ENCODE measurements at regions of chr16 and their contacts with region 1.

Region 1: DNA sequence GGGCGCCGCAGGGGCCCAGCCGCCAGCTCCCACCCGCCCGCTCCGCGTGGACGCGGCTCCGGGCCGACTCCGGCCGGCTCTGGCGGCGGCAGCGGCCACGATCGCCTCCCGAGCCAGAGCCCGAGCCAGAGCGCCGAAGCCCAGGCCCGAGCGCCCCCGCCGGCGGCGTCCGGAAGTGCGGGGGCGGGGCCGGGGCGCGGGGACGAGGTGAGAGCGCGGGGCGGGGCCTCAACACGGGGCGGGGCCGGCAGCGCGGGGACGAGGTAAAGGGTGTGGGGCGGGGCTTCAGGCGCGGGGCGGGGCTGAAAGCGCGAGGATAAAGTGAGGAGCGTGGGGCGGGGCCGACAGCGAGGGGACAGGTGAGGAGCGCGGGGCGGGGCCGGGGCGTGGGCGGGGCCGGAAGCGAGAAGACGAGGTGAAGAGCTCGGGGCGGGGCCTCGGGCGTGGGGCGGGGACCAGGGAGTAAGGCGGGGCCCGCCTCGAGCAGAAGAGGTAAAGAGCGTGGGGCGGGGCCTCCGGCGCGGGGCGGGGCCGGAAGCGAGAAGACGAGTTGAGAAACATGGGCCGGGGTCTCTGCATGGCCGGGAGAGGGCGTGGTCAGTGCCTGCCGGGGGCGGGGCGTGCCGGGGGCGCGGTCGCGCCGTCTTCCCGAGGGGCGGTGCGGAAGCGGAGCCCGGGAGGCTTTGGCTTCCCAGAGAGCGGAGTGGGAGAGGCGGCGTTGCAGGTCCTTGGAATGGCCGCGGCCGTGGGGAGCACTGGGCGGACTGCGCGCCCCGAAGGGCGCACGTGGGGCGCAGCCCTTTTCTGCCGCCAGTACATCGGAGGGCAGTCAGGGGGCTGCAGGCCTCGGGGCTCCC is at the start of gene AXIN1:
- DNase-seq: peak; percentile 99 to 100
- ATAC-seq: peak; percentile 84 to 86
- H3K4me3 ChIP-seq: peak within 1 kb of the TSS; percentile 54 to 75 (median 66)
- H3K27ac ChIP-seq: peak within 1 kb of the TSS; percentile 58 to 79 (median 74)
- H3K4me1 ChIP-seq: peaks cover 7 to 15% of the 10 kb centered on the region in 2 donors
- H3K27me3 ChIP-seq: no peaks in the 10 kb centered on the region
- CTCF ChIP-seq: peak in 4 of 5 experiments; percentile 49 to 83 (median 64)
- POLR2A ChIP-seq: peak; percentile 41 to 43
- total RNA-seq, gene AXIN1: 27.1 to 41.9 (median 32.7) TPM

Region 2: DNA sequence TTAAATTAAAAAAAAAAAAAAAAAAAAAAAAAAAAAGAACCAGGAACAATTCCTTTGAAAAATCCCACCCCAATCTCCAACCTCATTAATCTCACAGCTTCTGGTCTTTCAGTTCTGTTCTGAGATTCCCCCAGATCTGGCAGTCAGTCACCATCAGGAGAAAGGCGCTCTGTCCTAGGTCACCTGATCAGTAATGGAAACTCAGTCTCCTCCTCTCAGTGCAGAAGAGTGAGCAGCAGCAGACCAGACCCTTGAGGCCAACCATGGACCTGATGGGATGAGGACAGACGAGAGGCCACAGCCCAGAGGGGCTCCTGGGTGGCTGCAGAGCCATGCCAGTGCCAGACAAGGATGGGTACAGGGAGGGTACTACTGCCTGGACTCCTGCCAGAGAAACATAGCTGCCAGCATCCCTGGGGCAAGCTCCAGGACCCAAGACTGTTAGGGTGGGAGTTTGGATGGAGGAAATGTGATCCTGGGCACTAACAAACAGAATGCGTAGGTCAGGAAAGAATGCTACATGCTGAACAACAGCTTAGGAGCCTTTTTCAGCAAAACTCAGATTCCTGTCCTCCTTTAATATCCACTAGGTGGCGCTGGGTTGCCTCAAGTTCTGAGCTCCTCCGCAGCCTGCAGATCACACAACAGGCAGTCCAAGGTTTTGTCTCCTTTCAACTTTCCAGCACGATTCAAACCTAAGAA is 246.0 kb before region 1 on chr16:
- in situ Hi-C with region 1: no loop called
- intact Hi-C with region 1: loop called (anchors 5 kb)
- DNase-seq: peak; percentile 49
- ATAC-seq: peak in 1 of 2 donors; percentile 11
- H3K4me3 ChIP-seq: no peak overlapping the region
- H3K27ac ChIP-seq: no peak overlapping the region
- H3K4me1 ChIP-seq: peaks cover 30 to 32% of the 10 kb centered on the region in 2 donors
- H3K27me3 ChIP-seq: no peaks in the 10 kb centered on the region
- CTCF ChIP-seq: peak; percentile 70 to 88 (median 81)
- POLR2A ChIP-seq: no peak

Region 3: GRCh38 chr16:234468-235305 is 118.1 kb before region 1 on chr16 and contains the start of gene FAM234A:
- in situ Hi-C with region 1: no loop called
- intact Hi-C with region 1: loop called (anchors 2 kb)
- DNase-seq: peak; percentile 92 to 93
- ATAC-seq: peak; percentile 86 to 87
- H3K4me3 ChIP-seq: peak within 1 kb of the TSS; percentile 89 to 98 (median 96)
- H3K27ac ChIP-seq: peak within 1 kb of the TSS; percentile 99 to 100 (median 100)
- H3K4me1 ChIP-seq: peaks cover 15 to 16% of the 10 kb centered on the region in 2 donors
- H3K27me3 ChIP-seq: no peaks in the 10 kb centered on the region
- CTCF ChIP-seq: peak in 4 of 5 experiments; percentile 37 to 51 (median 48)
- POLR2A ChIP-seq: peak; percentile 99 to 100
- total RNA-seq, gene FAM234A: 85.2 to 288 (median 251) TPM

Region 4: DNA sequence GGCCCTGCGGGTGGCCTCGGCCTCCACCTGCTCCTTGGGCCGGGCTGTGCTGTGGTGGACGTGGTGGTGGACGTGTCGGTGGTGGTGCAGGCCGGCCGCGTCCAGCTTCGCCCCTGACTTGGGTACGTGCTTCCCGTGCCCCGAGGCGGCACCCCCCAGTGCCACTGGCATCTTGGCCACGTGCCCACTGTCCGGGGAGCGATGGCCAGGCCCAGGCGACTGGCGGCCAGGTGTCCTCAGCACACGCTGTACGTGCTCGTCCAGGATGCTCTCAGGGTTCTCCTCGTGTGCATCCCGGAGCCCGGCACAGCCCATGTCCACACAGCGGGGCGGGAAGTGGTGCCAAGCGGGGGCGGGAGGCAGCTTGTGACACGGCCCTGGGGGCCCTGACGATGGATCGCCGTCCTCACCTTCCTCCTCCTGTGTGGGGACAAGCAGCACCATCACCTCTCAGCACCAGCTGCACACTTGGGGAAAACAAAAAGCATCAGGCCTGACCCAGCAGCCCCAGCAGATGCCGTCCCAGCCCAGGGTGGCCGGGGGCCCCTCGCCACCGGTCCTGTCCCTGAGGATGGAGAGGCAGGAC is 54.9 kb before region 1 on chr16:
- in situ Hi-C with region 1: no loop called
- intact Hi-C with region 1: no loop called
- DNase-seq: no peak
- ATAC-seq: no peak
- H3K4me3 ChIP-seq: no peak overlapping the region
- H3K27ac ChIP-seq: no peak overlapping the region
- H3K4me1 ChIP-seq: no peaks in the 10 kb centered on the region
- H3K27me3 ChIP-seq: no peaks in the 10 kb centered on the region
- CTCF ChIP-seq: no peak
- POLR2A ChIP-seq: no peak

Region 5: DNA sequence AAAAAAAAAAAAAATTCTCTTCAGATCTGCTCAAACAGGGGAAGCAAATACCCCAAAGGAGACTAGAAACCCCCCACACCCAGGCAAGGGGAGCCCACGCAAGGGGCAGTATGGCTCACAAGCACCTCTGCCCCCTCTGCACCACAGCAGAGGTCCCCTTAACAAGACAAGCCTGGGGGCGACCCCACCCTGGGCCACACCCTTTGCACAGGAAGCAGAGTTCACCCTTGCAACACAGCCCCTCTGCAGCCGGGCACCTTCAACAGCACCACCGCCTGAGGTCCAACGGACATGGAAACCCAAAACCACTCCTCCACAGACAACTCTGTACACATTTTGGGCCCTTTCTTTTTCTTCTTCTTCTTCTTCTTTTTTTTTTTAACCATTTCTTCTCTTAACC is 13.1 kb before region 1 on chr16:
- in situ Hi-C with region 1: no loop called
- intact Hi-C with region 1: no loop called
- DNase-seq: no peak
- ATAC-seq: no peak
- H3K4me3 ChIP-seq: no peak overlapping the region
- H3K27ac ChIP-seq: no peak overlapping the region
- H3K4me1 ChIP-seq: peaks cover 6 to 13% of the 10 kb centered on the region in 2 donors
- H3K27me3 ChIP-seq: no peaks in the 10 kb centered on the region
- CTCF ChIP-seq: no peak
- POLR2A ChIP-seq: no peak

Region 6: DNA sequence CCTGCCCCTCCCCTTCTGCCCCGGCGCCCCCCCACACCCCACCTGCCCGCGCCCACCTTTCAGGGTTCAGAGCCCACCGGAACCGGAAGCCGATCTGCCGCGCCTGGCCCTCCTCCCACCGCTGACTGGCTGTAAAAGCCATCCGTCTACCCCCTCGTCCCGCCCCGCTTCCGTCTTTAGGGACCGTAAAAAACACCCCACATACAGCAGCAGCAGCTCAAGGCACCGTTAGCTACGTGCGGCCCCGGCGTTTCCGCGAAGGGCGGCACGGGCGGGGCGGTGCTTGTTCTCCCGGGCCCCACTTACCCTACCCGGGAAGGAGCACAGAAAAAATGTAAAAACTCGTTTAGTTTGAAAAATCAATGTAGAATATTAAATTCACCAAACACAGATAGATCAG is 17.7 kb after region 1 on chr16 and contains the start of gene MRPL28:
- in situ Hi-C with region 1: no loop called
- intact Hi-C with region 1: loop called (anchors 1 kb)
- DNase-seq: peak; percentile 92 to 95
- ATAC-seq: peak; percentile 99
- H3K4me3 ChIP-seq: peak within 1 kb of the TSS; percentile 38 to 66 (median 59)
- H3K27ac ChIP-seq: peak within 1 kb of the TSS; percentile 71 to 88 (median 84)
- H3K4me1 ChIP-seq: peaks cover 12 to 14% of the 10 kb centered on the region in 2 donors
- H3K27me3 ChIP-seq: no peaks in the 10 kb centered on the region
- CTCF ChIP-seq: no peak
- POLR2A ChIP-seq: peak in 1 of 2 donors; percentile 55
- total RNA-seq, gene MRPL28: 72.8 to 122 (median 87.4) TPM

Region 7: DNA sequence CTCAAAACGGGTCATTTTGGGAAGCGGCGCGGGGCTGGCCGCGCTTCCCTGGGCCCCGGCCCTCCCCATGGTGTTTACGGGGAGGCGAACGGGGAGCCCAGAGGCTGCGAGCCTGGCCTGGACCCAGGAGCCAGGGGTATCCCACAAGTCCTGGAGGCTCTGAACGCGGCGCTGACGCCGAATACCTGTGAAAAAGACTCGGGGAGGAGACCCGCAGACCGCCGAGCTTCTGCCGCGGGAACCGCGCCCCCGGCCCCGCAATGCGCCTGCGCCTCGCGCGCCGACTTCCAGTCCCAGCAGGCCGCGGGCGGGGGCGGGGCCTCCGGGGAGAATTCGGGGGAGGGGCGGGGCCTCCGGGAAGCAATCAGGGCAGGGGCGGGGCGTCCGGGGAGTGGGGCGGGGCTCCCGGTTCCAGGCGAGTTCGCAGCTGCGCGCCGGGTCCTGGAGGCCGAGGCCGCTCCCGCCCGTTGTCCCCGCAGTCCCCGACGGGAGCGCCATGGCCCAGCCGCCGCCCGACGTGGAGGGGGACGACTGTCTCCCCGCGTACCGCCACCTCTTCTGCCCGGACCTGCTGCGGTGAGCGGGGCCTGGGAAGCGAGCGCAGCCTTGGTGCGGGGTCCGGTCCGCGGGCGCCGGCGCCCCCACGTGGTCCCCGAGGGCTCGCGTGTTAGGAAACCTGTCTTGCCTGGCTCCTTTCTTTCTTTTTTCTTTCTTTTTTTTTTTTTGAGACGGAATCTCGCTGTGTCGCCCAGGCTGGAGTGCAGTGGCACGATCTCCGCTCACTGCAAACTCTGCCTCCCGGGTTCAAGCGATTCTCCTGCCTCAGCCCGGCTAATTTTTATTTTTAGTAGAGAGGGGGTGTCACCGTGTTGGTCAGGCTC is 48.9 kb after region 1 on chr16 and contains the start of gene DECR2:
- in situ Hi-C with region 1: no loop called
- intact Hi-C with region 1: loop called (anchors 1 kb)
- DNase-seq: peak; percentile 93
- ATAC-seq: peak; percentile 83 to 84
- H3K4me3 ChIP-seq: peak within 1 kb of the TSS; percentile 85 to 98 (median 91)
- H3K27ac ChIP-seq: peak within 1 kb of the TSS; percentile 88 to 98 (median 96)
- H3K4me1 ChIP-seq: peaks cover 16 to 18% of the 10 kb centered on the region in 2 donors
- H3K27me3 ChIP-seq: no peaks in the 10 kb centered on the region
- CTCF ChIP-seq: peak in 4 of 5 experiments; percentile 45 to 55 (median 50)
- POLR2A ChIP-seq: peak; percentile 89 to 93
- total RNA-seq, gene DECR2: 17.0 to 23.3 (median 18.8) TPM

Region 8: GRCh38 chr16:450385-451134 is 97.8 kb after region 1 on chr16:
- in situ Hi-C with region 1: no loop called
- intact Hi-C with region 1: no loop called
- DNase-seq: no peak
- ATAC-seq: no peak
- H3K4me3 ChIP-seq: no peak overlapping the region
- H3K27ac ChIP-seq: no peak overlapping the region
- H3K4me1 ChIP-seq: no peaks in the 10 kb centered on the region
- H3K27me3 ChIP-seq: no peaks in the 10 kb centered on the region
- CTCF ChIP-seq: no peak
- POLR2A ChIP-seq: no peak

Measured in gastrocnemius medialis (tissue), 4 donors.